ENCODE measurements at regions of chr1 and their contacts with region 1.

Region 1: GRCh38 chr1:158506369-158506987 is 34.5 kb downstream of the OR10R2 start:
- DNase-seq: peak; percentile 61
- H3K4me3 Mint-ChIP-seq: no peak overlapping the region
- H3K27ac Mint-ChIP-seq: no peak overlapping the region
- H3K4me1 Mint-ChIP-seq: no peaks in the 10 kb centered on the region
- H3K27me3 Mint-ChIP-seq: peaks cover 26% of the 10 kb centered on the region

Region 2: DNA sequence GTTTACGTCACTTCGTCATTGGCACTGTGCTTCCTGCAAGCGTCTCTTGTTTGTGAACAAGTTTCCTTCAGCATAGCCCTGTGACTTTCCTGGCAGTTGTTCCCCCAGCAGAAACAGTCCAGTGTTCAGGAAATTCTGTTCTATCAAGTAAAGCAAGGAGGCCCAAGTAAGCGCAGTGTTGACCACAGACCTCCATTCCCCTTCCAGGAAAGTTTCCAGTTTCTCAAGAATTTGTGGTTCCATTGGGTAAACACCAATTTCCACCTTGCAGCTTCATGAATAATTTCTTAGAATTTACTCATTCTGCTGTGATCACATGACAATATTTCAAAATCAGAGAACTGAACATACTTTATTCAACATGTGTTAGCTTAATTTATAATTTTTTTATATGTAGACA is 1279.7 kb before region 1 on chr1:
- CTCF ChIA-PET with region 1: no interaction called
- intact Hi-C with region 1: no loop called
- DNase-seq: no peak
- H3K4me3 Mint-ChIP-seq: no peak overlapping the region
- H3K27ac Mint-ChIP-seq: no peak overlapping the region
- H3K4me1 Mint-ChIP-seq: no peaks in the 10 kb centered on the region
- H3K27me3 Mint-ChIP-seq: peaks cover 22% of the 10 kb centered on the region

Region 3: DNA sequence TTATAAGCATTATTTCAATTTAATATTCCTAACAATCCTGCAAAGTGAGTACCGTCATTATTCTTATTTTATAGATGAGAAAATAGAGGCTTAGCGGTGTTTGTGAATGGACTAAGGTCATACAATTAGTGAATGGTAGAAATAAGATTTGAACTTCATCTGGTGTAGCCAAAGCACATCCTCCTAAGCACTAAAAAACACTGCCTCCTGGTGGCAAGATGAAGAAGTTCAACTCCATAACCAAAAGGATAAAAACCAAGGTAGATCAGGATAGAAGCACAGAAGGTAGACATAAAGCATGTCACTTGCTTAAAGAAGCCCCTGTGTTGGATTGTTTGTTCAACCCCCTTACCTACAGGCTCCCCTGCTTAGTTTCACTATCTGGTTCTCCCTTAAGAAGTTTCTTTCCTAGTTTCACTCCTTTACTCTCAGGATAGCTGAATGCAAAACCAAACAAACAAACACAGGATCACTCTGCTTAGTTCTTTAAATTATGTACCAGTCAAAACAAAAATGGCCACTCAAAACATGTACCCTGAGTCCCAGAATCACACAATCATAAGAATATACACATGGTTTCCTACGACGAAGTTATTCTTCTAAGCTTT is 582.8 kb after region 1 on chr1:
- CTCF ChIA-PET with region 1: no interaction called
- intact Hi-C with region 1: loop called (anchors 5 kb)
- DNase-seq: peak; percentile 44
- H3K4me3 Mint-ChIP-seq: no peak overlapping the region
- H3K27ac Mint-ChIP-seq: peak overlapping the region; percentile 47
- H3K4me1 Mint-ChIP-seq: peaks cover 49% of the 10 kb centered on the region
- H3K27me3 Mint-ChIP-seq: no peaks in the 10 kb centered on the region

Measured in activated naive CD4-positive, alpha-beta T cell treated with anti-CD3 and anti-CD28 coated beads for 36 hours (primary cell).